Activated CD4-positive, alpha-beta T cell treated with anti-CD3 and anti-CD28 coated beads for 36 hours (primary cell): ENCODE measurements at regions of chr1 and their contacts with region 1.

Region 1: GRCh38 chr1:184973272-184974055 is 844 bp downstream of the NIBAN1 start:
- DNase-seq: peak; percentile 84
- ATAC-seq: peak; percentile 63
- H3K4me3 Mint-ChIP-seq: peak overlapping the region; percentile 86
- H3K27ac Mint-ChIP-seq: peak overlapping the region; percentile 97
- H3K4me1 Mint-ChIP-seq: peaks cover 45% of the 10 kb centered on the region
- H3K27me3 Mint-ChIP-seq: peaks cover 16% of the 10 kb centered on the region

Region 2: GRCh38 chr1:184805667-184806295 is 167.7 kb before region 1 on chr1:
- CTCF ChIA-PET with region 1: interaction called, 28 read pairs
- POLR2A ChIA-PET with region 1: no interaction called
- intact Hi-C with region 1: no loop called
- DNase-seq: peak; percentile 91
- ATAC-seq: peak; percentile 99
- H3K4me3 Mint-ChIP-seq: no peak overlapping the region
- H3K27ac Mint-ChIP-seq: no peak overlapping the region
- H3K4me1 Mint-ChIP-seq: peaks cover 4% of the 10 kb centered on the region
- H3K27me3 Mint-ChIP-seq: no peaks in the 10 kb centered on the region

Region 3: DNA sequence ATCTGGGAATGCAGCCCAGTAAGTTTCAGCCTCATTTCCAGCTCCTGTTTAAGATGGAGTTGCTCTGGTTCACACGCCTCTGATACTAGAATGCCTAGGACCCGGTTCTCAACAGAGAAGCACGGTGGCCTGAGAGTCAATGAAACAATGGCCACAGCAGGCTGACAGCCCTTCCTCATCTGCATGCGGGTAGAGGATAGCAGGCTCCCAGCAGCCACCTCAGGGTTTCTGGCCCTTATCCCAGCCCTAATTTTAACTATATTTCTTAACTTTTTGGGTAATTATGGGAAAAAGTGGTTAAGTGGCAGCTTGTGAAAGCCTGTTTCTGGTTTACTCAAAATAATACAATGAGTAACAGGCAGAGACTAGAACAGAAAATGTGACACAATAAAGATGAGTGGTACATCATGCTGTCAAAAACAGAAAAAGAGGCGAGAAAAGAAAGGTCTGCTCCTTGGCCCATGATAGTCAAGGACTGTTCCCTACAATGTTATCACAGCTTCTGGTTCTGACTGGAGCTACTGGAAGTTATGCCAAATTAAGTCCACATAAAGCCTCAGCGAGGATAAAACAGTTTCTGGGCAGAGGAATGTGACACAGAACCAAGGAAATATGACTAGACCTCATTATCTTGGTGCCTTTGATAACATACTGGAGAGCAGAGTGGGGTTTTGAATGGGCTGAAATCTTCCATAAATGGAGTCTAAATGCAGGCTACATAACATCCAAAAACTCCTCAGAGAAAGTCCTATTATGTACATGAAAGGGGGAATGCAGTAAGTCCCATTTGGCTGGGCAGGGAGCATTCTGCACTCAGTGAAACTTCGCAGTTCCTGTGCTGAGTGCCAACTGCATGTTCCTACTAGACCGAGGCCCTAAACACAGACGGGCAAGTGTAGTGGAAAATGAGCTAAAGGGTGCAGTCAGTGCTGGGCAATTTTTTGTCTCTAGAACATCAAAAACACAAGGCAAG is 91.2 kb before region 1 on chr1:
- CTCF ChIA-PET with region 1: interaction called, 5 read pairs
- POLR2A ChIA-PET with region 1: interaction called, 8 read pairs
- intact Hi-C with region 1: loop called (anchors 1 kb)
- DNase-seq: peak; percentile 50
- ATAC-seq: peak; percentile 79
- H3K4me3 Mint-ChIP-seq: peak overlapping the region; percentile 5
- H3K27ac Mint-ChIP-seq: peak overlapping the region; percentile 90
- H3K4me1 Mint-ChIP-seq: peaks cover 27% of the 10 kb centered on the region
- H3K27me3 Mint-ChIP-seq: peaks cover 6% of the 10 kb centered on the region

Region 4: GRCh38 chr1:184953600-184954219 is 19.8 kb before region 1 on chr1:
- CTCF ChIA-PET with region 1: interaction called, 3 read pairs
- POLR2A ChIA-PET with region 1: interaction called, 3 read pairs
- intact Hi-C with region 1: loop called (anchors 2 kb)
- DNase-seq: no peak
- ATAC-seq: peak; percentile 88
- H3K4me3 Mint-ChIP-seq: peak overlapping the region; percentile 40
- H3K27ac Mint-ChIP-seq: peak overlapping the region; percentile 65
- H3K4me1 Mint-ChIP-seq: peaks cover 20% of the 10 kb centered on the region
- H3K27me3 Mint-ChIP-seq: no peaks in the 10 kb centered on the region

Region 5: GRCh38 chr1:185156854-185157598 is 183.6 kb after region 1 on chr1 and contains the starts of genes SWT1 and TRMT1L:
- CTCF ChIA-PET with region 1: no interaction called
- POLR2A ChIA-PET with region 1: no interaction called
- intact Hi-C with region 1: loop called (anchors 2 to 5 kb)
- DNase-seq: peak; percentile 99
- ATAC-seq: peak; percentile 94
- H3K4me3 Mint-ChIP-seq: peak within 1 kb of the TSS; percentile 91
- H3K27ac Mint-ChIP-seq: peak within 1 kb of the TSS; percentile 95
- H3K4me1 Mint-ChIP-seq: peaks cover 50% of the 10 kb centered on the region
- H3K27me3 Mint-ChIP-seq: no peaks in the 10 kb centered on the region
- total RNA-seq, gene SWT1: 3.0 to 3.3 TPM
- total RNA-seq, gene TRMT1L: 33.7 to 38.7 TPM

Region 6: DNA sequence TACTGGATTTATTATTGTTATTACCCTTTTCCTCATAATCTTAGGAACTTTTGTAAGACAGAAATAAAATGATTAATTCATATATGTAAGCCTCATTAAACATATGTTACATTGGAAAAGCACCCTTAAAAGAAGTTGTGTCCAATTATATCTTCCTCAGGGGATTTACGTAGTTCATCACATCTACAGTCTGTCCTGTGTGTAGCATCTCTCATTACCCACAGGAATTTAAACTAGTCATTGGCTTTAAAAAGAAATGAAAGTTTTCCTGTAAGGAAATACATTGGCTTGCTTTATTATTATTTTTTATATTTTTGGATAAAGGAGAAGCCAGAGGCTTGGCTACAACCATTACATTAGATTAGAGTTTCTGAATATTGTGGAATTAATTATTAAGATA is 239.6 kb after region 1 on chr1:
- CTCF ChIA-PET with region 1: no interaction called
- POLR2A ChIA-PET with region 1: no interaction called
- intact Hi-C with region 1: no loop called
- DNase-seq: no peak
- ATAC-seq: no peak
- H3K4me3 Mint-ChIP-seq: no peak overlapping the region
- H3K27ac Mint-ChIP-seq: no peak overlapping the region
- H3K4me1 Mint-ChIP-seq: no peaks in the 10 kb centered on the region
- H3K27me3 Mint-ChIP-seq: no peaks in the 10 kb centered on the region